Psoas muscle (tissue), 8 donors: ENCODE measurements at regions of chrX and their contacts with region 1.

Region 1: DNA sequence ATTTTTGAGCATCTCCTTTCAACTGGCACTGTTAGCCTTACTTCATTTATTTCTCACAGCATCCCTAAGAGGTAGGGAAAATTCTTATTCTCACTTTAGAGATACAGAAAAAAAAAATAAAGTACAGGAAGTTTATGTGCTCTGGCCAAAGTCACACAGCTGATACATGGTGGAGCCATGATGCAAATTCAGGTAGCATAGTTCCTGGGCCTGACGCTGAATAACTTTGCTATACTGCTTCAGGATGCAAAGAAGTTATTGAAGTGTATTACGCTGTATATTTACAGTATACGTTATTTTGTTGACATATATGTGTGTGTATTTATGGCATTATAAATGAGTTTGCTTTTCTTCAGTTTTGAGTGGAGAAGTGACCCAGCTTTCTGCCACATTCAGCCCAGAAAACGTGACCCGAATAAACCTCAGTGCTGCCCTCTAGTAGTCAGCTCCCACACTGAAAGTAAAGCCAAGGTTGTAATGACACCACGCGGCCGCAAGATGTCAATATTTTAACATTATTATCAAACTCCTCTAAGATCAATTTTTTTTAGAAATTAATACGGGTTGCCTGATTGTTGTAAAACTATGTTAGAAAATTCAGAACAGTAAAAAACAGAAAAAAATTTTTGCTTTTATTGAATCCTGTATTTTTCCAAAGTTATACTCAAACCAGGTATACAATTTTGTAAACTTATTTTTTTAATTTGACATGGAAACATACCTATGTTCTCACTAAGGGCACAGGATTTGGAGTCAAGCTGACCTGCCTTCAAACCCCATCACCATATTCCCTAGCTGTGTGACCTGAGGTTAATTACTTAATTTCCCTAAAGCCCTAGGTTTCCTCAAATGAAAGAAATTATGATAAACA is 3.8 kb upstream of the GUCY2F start:
- DNase-seq: peak; percentile 18 to 63
- ATAC-seq: peak; percentile 58 to 77 (median 62)
- H3K4me3 ChIP-seq: no peak overlapping the region
- H3K27ac ChIP-seq: no peak overlapping the region
- H3K4me1 ChIP-seq: no peaks in the 10 kb centered on the region
- H3K27me3 ChIP-seq: peaks cover 0 to 9% (median 0%) of the 10 kb centered on the region in 3 donors
- CTCF ChIP-seq: peak; percentile 98

Region 2: GRCh38 chrX:108584617-108585211 is 901.0 kb before region 1 on chrX:
- intact Hi-C with region 1: no loop called
- DNase-seq: no peak
- ATAC-seq: no peak
- H3K4me3 ChIP-seq: no peak overlapping the region
- H3K27ac ChIP-seq: no peak overlapping the region
- H3K4me1 ChIP-seq: no peaks in the 10 kb centered on the region
- H3K27me3 ChIP-seq: peaks cover 0 to 12% (median 0%) of the 10 kb centered on the region in 3 donors
- CTCF ChIP-seq: peak; percentile 22

Region 3: DNA sequence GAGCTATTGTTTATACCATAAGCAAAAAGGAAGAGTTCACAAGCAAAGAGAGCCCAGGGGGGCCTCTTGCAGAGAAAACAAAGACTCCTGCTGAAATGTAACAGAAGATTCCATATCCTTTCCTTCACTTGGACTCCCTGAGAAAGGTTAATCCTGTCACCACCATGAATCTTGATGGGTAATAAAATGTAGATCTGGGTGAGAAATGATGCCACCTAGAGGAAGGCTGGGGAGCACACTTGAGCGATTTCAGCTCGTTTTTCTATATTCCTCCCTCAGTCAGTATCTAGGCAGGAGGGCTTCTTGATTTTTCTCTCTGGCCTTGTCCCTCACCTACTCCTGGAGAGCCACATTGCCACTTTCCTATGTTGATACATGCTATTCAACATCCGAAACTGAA is 149.5 kb after region 1 on chrX:
- intact Hi-C with region 1: loop called (anchors 2 kb)
- DNase-seq: no peak
- ATAC-seq: no peak
- H3K4me3 ChIP-seq: no peak overlapping the region
- H3K27ac ChIP-seq: no peak overlapping the region
- H3K4me1 ChIP-seq: no peaks in the 10 kb centered on the region
- H3K27me3 ChIP-seq: peaks cover 0 to 9% (median 0%) of the 10 kb centered on the region in 3 donors
- CTCF ChIP-seq: peak; percentile 35

Region 4: GRCh38 chrX:109886122-109886761 is 400.5 kb after region 1 on chrX:
- intact Hi-C with region 1: loop called in 1 of 2 experiments (anchors 5 kb)
- DNase-seq: no peak
- ATAC-seq: peak in 1 of 4 donors; percentile 63
- H3K4me3 ChIP-seq: no peak overlapping the region
- H3K27ac ChIP-seq: no peak overlapping the region
- H3K4me1 ChIP-seq: no peaks in the 10 kb centered on the region
- H3K27me3 ChIP-seq: peaks cover 0 to 6% (median 0%) of the 10 kb centered on the region in 3 donors
- CTCF ChIP-seq: peak; percentile 59

Region 5: GRCh38 chrX:110108381-110108821 is 622.7 kb after region 1 on chrX:
- intact Hi-C with region 1: no loop called
- DNase-seq: no peak
- ATAC-seq: no peak
- H3K4me3 ChIP-seq: no peak overlapping the region
- H3K27ac ChIP-seq: no peak overlapping the region
- H3K4me1 ChIP-seq: no peaks in the 10 kb centered on the region
- H3K27me3 ChIP-seq: peaks cover 0 to 6% (median 0%) of the 10 kb centered on the region in 3 donors
- CTCF ChIP-seq: no peak